ENCODE measurements at regions of chr10 and their contacts with region 1.

Region 1: GRCh38 chr10:25016376-25017154 is at the start of gene THNSL1:
- DNase-seq: peak; percentile 100
- H3K4me3 ChIP-seq: peak within 1 kb of the TSS; percentile 51
- H3K27ac ChIP-seq: peak within 1 kb of the TSS; percentile 82
- H3K4me1 ChIP-seq: peaks cover 6% of the 10 kb centered on the region
- H3K27me3 ChIP-seq: no peaks in the 10 kb centered on the region
- CTCF ChIP-seq: no peak
- total RNA-seq, gene THNSL1: 6.2 and 7.1 TPM in 2 replicates

Region 2: DNA sequence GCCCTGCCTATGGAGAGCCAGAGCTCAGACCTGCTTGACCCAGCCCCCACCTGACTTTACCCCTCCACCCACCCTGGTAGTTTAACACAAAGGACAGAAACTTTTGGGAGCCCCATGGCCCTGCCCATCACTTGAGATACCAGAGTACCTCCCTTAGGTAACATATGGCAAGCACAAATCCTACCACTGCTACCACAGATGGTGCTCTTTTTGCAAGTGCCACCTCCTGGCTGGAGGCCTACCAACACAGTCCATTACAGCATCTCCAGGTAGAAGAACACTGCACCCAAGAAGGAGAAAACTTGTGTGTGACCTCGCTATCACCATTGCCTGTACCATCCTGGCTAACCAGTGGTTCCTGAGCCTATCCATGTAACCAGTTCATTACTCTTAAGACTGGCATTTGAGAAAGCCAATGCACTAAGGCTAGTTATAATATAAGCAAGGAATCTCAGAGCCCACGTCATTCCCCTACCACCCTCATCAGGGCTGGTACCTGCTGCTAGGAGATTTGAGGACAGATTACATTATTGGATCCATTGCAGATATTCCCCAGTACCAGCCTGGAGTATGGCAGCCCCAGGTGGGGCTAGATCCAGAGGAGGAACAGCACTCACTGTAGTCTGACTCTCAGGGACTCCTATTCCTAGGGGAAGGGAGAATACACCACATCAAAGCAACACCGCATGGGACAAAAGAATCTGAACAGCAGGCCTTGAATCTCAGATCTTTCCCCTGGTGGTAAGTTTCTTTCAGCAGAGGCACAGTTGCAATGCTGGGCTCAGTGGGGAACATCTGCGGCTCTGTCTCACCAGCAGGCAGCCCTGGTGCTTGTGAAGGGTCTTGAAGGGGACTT is 182.0 kb before region 1 on chr10:
- CTCF ChIA-PET with region 1: no interaction called
- POLR2A ChIA-PET with region 1: no interaction called
- intact Hi-C with region 1: no loop called
- DNase-seq: no peak
- H3K4me3 ChIP-seq: no peak overlapping the region
- H3K27ac ChIP-seq: no peak overlapping the region
- H3K4me1 ChIP-seq: no peaks in the 10 kb centered on the region
- H3K27me3 ChIP-seq: no peaks in the 10 kb centered on the region
- CTCF ChIP-seq: no peak

Region 3: DNA sequence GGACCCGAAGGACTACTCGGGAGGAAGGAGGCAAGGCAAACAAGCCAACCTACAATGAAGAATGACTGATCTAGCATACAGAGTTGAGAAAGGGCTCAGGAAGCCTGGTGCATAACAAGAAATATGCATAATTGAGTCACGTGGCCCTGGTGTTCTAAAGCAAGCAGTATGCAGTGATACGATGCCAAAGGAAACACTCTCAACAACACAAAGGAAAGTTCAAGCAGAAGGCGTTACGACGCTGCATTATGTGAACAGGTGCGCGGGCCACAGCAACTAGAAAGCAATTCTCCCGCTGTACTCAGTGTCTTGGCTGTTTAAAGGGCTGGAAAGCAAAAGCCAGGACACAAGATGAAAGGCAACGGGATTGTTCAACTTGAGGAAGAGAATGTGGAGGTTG is 164.9 kb before region 1 on chr10:
- CTCF ChIA-PET with region 1: no interaction called
- POLR2A ChIA-PET with region 1: interaction called, 3 read pairs
- intact Hi-C with region 1: loop called (anchors 10 kb)
- DNase-seq: peak; percentile 74
- H3K4me3 ChIP-seq: no peak overlapping the region
- H3K27ac ChIP-seq: peak overlapping the region; percentile 43
- H3K4me1 ChIP-seq: peaks cover 51% of the 10 kb centered on the region
- H3K27me3 ChIP-seq: no peaks in the 10 kb centered on the region
- CTCF ChIP-seq: no peak

Measured in A673 (cell line).